ENCODE measurements at regions of chr2 and their contacts with region 1.

Region 1: DNA sequence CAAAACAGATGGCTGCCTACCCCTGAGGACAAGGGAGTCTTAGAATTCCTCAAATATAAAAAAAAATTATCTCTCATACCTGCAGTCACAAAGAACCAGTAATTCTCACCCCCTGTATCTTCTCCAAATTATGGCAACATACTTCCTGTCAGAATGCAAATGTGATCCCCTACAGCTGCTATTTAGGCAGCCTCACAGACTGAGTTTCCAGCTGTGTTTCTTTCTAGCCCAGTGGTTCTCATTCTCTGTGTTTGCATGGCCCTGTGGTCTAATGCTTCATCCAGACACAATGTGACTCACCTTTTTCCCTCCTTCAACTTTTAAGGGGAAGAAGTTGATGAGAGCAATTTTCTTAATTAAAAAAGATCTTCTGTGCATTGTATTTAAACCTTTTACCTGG is 726.3 kb downstream of the TSN start:
- DNase-seq: no peak
- H3K4me3 ChIP-seq: no peak overlapping the region
- H3K27ac ChIP-seq: no peak overlapping the region
- H3K4me1 ChIP-seq: no peaks in the 10 kb centered on the region
- H3K27me3 ChIP-seq: no peaks in the 10 kb centered on the region
- CTCF ChIP-seq: no peak
- POLR2A ChIP-seq: no peak

Region 2: DNA sequence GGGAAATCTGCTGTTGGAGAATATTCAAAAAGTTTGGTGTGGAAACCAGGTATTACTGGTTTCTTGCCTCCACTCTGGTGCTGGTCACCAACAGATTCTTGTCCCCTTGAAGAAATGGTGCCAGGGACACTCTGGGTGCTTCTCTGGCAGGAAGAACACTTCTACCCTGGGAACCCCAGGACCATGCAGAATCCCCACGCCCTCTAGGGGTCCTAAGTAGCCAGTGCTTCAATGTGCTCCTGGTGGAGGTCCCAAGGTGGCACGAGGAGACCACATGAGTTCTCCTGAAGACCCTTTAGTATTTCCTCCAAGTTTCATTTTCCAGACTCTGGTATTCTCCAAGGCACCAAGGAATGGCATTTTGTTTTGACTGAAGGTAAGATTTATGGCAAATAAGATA is 345.7 kb before region 1 on chr2:
- intact Hi-C with region 1: no loop called
- DNase-seq: no peak
- H3K4me3 ChIP-seq: no peak overlapping the region
- H3K27ac ChIP-seq: no peak overlapping the region
- H3K4me1 ChIP-seq: no peaks in the 10 kb centered on the region
- H3K27me3 ChIP-seq: no peaks in the 10 kb centered on the region
- CTCF ChIP-seq: no peak
- POLR2A ChIP-seq: no peak

Region 3: GRCh38 chr2:122748552-122749011 is 266.9 kb after region 1 on chr2:
- intact Hi-C with region 1: no loop called
- DNase-seq: no peak
- H3K4me3 ChIP-seq: no peak overlapping the region
- H3K27ac ChIP-seq: no peak overlapping the region
- H3K4me1 ChIP-seq: no peaks in the 10 kb centered on the region
- H3K27me3 ChIP-seq: no peaks in the 10 kb centered on the region
- CTCF ChIP-seq: no peak
- POLR2A ChIP-seq: no peak

Region 4: GRCh38 chr2:122993592-122993991 is 511.9 kb after region 1 on chr2:
- intact Hi-C with region 1: loop called (anchors 5 kb)
- DNase-seq: no peak
- H3K4me3 ChIP-seq: no peak overlapping the region
- H3K27ac ChIP-seq: no peak overlapping the region
- H3K4me1 ChIP-seq: no peaks in the 10 kb centered on the region
- H3K27me3 ChIP-seq: no peaks in the 10 kb centered on the region
- CTCF ChIP-seq: no peak
- POLR2A ChIP-seq: no peak